Panc1 (cell line): ENCODE measurements at regions of chr12 and their contacts with region 1.

Region 1: DNA sequence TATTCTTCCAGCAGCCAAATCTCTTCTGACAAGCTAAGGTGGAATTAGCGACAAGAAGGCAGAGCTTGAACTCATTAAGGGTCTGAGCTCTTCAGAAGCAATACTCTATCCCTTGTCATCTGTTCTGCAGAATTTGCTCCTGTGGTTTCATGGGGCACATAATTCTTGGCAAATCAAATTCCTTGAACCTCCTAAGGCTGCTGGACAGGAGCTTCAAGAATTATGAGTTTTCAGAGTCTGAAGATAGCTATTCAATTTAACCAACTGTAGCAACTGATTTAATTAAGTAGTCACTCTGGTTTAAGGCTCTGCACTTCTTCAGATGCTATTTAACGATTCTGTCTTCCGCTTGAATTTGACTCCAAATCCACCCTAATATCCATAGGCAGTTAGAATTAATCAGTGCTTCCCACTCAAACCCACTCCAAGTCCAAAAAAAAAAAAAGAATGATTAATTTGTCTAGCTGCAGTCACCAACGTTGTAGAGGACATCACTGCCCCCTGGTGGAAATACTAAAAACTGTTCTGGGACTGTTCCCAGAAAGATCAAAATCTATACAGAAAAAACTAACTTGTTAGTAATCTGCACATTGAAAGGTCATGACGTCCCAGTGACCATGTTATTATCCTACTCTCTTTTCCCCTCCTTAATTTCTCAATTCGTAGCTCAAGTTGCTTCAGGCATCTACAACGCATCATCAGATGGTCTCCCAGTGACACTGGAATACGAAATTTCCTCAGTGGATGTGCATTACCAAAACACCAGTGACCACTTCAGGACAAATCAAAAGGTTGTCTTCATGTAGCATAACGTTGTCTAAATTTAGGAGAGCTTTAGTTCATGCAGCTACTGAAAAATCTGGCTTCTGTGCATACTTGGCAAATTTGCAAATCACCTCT is 169.8 kb downstream of the KIF21A start:
- DNase-seq: peak; percentile 10
- ATAC-seq: no peak
- H3K4me3 ChIP-seq: no peak overlapping the region
- H3K27ac ChIP-seq: no peak overlapping the region
- H3K4me1 ChIP-seq: no peaks in the 10 kb centered on the region
- H3K27me3 ChIP-seq: no peaks in the 10 kb centered on the region
- CTCF ChIP-seq: peak; percentile 73

Region 2: GRCh38 chr12:38744041-38744440 is 529.1 kb before region 1 on chr12:
- CTCF ChIA-PET with region 1: no interaction called
- POLR2A ChIA-PET with region 1: no interaction called
- in situ Hi-C with region 1: no loop called
- intact Hi-C with region 1: no loop called
- DNase-seq: no peak
- ATAC-seq: no peak
- H3K4me3 ChIP-seq: no peak overlapping the region
- H3K27ac ChIP-seq: no peak overlapping the region
- H3K4me1 ChIP-seq: no peaks in the 10 kb centered on the region
- H3K27me3 ChIP-seq: no peaks in the 10 kb centered on the region
- CTCF ChIP-seq: no peak

Region 3: DNA sequence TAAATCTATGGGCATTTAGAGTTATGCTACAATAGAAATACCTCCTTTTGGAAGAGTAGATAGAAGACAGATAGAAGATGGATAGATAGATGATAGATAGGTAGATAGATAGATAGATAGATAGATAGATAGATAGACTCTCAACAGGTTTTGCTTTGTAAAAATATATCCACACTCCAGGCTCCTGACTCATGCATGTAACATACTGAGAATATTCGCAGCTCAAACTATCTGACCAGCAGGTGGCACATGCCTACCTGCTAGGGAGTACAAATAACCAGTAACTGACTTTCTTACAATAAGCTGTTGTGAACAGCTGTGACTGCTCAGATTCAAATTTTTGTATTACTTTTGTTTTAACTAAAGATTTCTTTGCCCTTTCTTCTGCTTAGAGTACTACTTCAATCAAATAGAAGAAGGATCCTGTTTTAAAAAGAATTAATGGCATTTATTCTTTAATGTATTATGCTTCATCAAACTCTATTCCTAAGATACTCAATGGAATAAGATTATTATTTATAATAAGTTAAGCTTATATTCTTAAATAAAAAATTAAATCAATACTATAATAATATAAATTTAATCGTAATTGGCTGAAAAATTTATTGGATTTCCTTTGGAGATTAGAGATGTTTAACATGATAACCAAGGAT is 352.0 kb before region 1 on chr12:
- CTCF ChIA-PET with region 1: interaction called, 19 read pairs
- POLR2A ChIA-PET with region 1: no interaction called
- in situ Hi-C with region 1: no loop called
- intact Hi-C with region 1: loop called (anchors 2 kb)
- DNase-seq: peak; percentile 54
- ATAC-seq: peak; percentile 92
- H3K4me3 ChIP-seq: no peak overlapping the region
- H3K27ac ChIP-seq: no peak overlapping the region
- H3K4me1 ChIP-seq: no peaks in the 10 kb centered on the region
- H3K27me3 ChIP-seq: no peaks in the 10 kb centered on the region
- CTCF ChIP-seq: peak; percentile 74; the same call in 1 of the 2 replicates

Region 4: GRCh38 chr12:39173726-39174125 is 99.4 kb before region 1 on chr12:
- CTCF ChIA-PET with region 1: no interaction called
- POLR2A ChIA-PET with region 1: no interaction called
- in situ Hi-C with region 1: no loop called
- intact Hi-C with region 1: no loop called
- DNase-seq: no peak
- ATAC-seq: no peak
- H3K4me3 ChIP-seq: no peak overlapping the region
- H3K27ac ChIP-seq: no peak overlapping the region
- H3K4me1 ChIP-seq: no peaks in the 10 kb centered on the region
- H3K27me3 ChIP-seq: no peaks in the 10 kb centered on the region
- CTCF ChIP-seq: no peak

Region 5: DNA sequence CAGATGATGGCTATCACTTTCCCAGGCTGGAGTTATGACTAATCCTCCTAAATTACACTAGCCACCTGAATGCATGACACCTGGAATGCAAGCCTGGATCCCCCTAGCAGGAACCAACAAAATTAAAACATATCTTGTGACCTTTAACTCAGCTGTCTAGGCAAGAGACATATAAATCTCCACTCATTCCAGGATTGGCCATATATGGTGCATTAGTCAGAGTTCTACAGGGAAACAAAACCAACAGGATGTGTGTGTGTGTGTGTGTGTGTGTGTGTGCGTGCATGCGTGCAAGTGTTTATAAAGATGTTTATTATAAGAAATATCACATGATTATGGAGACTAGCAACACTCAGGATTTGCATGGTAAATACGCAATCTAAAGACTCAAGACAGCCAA is 43.0 kb before region 1 on chr12:
- CTCF ChIA-PET with region 1: interaction called, 10 read pairs
- POLR2A ChIA-PET with region 1: no interaction called
- in situ Hi-C with region 1: no loop called
- intact Hi-C with region 1: no loop called
- DNase-seq: no peak
- ATAC-seq: no peak
- H3K4me3 ChIP-seq: no peak overlapping the region
- H3K27ac ChIP-seq: no peak overlapping the region
- H3K4me1 ChIP-seq: no peaks in the 10 kb centered on the region
- H3K27me3 ChIP-seq: no peaks in the 10 kb centered on the region
- CTCF ChIP-seq: no peak